WTC11 (cell line): ENCODE measurements at regions of chr7 and their contacts with region 1.

Region 1: GRCh38 chr7:12458520-12459131 is 55.0 kb upstream of the VWDE start:
- DNase-seq: no peak
- ATAC-seq: peak; percentile 96
- H3K4me3 Mint-ChIP-seq: no peak overlapping the region
- H3K27ac Mint-ChIP-seq: no peak overlapping the region
- H3K4me1 Mint-ChIP-seq: no peaks in the 10 kb centered on the region
- H3K27me3 Mint-ChIP-seq: no peaks in the 10 kb centered on the region
- CTCF ChIP-seq: peak; percentile 70; the same call in 1 of the 2 replicates

Region 2: DNA sequence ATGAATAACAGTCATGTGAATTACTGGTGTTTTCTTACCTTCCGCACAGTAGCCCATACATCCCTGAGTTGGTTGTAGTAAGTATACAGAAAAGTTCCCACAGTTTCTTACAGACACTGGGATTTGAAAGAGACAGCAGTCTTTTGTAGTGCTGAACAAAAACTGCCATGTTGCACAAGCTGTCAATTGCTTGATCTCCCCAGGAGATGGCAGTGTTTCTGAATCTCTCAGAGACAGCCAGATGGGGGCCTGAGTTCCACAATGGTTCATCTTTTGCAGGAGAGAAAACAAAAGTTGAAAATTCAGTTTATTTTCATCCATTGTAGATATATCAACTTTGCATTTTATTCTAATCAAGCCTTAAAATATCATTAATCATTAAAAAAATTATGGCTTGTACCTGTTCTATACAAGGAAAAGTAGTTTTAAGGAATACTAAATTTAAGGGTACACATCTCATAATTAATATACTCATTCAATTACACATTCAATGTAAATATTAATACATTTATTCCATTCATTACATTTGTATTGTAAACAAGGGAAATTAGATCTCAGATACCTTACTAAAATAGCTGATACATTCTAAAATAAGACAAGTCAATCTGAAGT is 69.4 kb before region 1 on chr7:
- CTCF ChIA-PET with region 1: interaction called, 17 read pairs
- POLR2A ChIA-PET with region 1: no interaction called
- DNase-seq: peak; percentile 65
- ATAC-seq: peak; percentile 93
- H3K4me3 Mint-ChIP-seq: no peak overlapping the region
- H3K27ac Mint-ChIP-seq: no peak overlapping the region
- H3K4me1 Mint-ChIP-seq: peaks cover 30% of the 10 kb centered on the region
- H3K27me3 Mint-ChIP-seq: no peaks in the 10 kb centered on the region
- CTCF ChIP-seq: peak; percentile 62

Region 3: GRCh38 chr7:12444785-12445184 is 13.8 kb before region 1 on chr7:
- CTCF ChIA-PET with region 1: interaction called, 52 read pairs
- POLR2A ChIA-PET with region 1: no interaction called
- DNase-seq: no peak
- ATAC-seq: no peak
- H3K4me3 Mint-ChIP-seq: no peak overlapping the region
- H3K27ac Mint-ChIP-seq: no peak overlapping the region
- H3K4me1 Mint-ChIP-seq: peaks cover 7% of the 10 kb centered on the region
- H3K27me3 Mint-ChIP-seq: no peaks in the 10 kb centered on the region
- CTCF ChIP-seq: no peak

Region 4: DNA sequence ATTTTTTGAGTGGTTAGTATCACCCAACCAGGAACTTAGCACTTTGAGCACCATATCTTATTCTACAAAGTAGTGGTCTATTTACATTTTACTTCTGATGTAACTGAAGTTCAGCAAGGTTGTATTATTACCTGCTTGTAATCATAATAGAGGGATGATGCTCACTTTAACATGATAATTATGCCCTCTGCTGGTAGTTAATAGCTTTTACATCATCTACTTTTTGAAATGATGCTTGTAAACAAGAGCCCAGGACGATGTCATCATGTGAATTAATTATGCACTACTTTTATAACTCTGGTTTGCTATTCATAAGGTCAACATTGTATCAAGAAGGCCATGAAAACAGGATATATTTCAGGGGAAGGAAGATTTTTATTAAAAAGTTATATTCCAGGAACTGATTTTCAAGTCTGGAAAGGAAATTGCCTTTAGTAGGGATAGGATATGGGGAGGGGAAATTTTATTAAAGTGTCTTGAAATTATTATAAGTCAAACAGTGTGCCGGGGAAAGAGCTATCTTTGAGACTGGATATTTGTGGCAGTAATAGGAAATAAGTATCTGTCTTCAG is 31.6 kb after region 1 on chr7:
- CTCF ChIA-PET with region 1: interaction called, 90 read pairs
- POLR2A ChIA-PET with region 1: no interaction called
- DNase-seq: no peak
- ATAC-seq: peak; percentile 65
- H3K4me3 Mint-ChIP-seq: no peak overlapping the region
- H3K27ac Mint-ChIP-seq: no peak overlapping the region
- H3K4me1 Mint-ChIP-seq: peaks cover 29% of the 10 kb centered on the region
- H3K27me3 Mint-ChIP-seq: no peaks in the 10 kb centered on the region
- CTCF ChIP-seq: peak; percentile 43

Region 5: GRCh38 chr7:12584930-12585329 is 126.3 kb after region 1 on chr7:
- CTCF ChIA-PET with region 1: no interaction called
- POLR2A ChIA-PET with region 1: no interaction called
- DNase-seq: no peak
- ATAC-seq: no peak
- H3K4me3 Mint-ChIP-seq: no peak overlapping the region
- H3K27ac Mint-ChIP-seq: no peak overlapping the region
- H3K4me1 Mint-ChIP-seq: no peaks in the 10 kb centered on the region
- H3K27me3 Mint-ChIP-seq: no peaks in the 10 kb centered on the region
- CTCF ChIP-seq: no peak

Region 6: DNA sequence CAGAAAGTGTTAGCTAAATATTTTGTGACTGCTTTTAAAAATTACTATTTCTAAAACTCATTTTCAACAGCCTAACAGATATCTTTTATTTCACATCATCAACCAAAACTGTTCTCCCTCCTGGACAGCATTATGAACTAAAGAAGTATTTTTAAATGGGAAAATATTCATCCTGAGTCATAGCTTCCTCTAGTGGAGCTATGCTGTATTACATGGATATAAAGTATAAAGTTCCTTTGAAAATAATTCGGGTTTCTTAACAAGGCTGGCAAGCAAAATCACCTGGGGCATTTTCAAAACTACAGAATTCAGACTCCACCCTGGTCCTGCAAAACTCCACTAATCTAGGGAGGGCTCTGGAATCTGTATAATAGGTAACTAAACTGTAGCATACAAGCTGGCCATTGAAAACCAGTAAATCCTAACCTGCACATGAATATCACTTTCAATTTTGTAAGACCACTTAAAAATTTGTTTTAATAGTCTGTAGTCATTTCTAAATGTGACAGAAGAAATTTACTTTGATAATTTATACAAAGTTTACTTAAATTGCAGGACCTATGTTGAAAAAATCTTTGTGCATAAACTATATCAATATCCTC is 165.4 kb after region 1 on chr7:
- CTCF ChIA-PET with region 1: interaction called, 13 read pairs
- POLR2A ChIA-PET with region 1: no interaction called
- DNase-seq: no peak
- ATAC-seq: peak; percentile 46; the same call in 1 of the 2 replicates
- H3K4me3 Mint-ChIP-seq: no peak overlapping the region
- H3K27ac Mint-ChIP-seq: no peak overlapping the region
- H3K4me1 Mint-ChIP-seq: peaks cover 5% of the 10 kb centered on the region
- H3K27me3 Mint-ChIP-seq: no peaks in the 10 kb centered on the region; the same call in 1 of the 2 replicates
- CTCF ChIP-seq: peak; percentile 78

Region 7: GRCh38 chr7:13115213-13115665 is 656.6 kb after region 1 on chr7:
- CTCF ChIA-PET with region 1: no interaction called
- POLR2A ChIA-PET with region 1: no interaction called
- DNase-seq: no peak
- ATAC-seq: peak; percentile 87
- H3K4me3 Mint-ChIP-seq: no peak overlapping the region
- H3K27ac Mint-ChIP-seq: peak overlapping the region; percentile 44
- H3K4me1 Mint-ChIP-seq: peaks cover 18% of the 10 kb centered on the region
- H3K27me3 Mint-ChIP-seq: no peaks in the 10 kb centered on the region
- CTCF ChIP-seq: no peak